PC-9 (cell line): ENCODE measurements at regions of chr2 and their contacts with region 1.

Region 1: DNA sequence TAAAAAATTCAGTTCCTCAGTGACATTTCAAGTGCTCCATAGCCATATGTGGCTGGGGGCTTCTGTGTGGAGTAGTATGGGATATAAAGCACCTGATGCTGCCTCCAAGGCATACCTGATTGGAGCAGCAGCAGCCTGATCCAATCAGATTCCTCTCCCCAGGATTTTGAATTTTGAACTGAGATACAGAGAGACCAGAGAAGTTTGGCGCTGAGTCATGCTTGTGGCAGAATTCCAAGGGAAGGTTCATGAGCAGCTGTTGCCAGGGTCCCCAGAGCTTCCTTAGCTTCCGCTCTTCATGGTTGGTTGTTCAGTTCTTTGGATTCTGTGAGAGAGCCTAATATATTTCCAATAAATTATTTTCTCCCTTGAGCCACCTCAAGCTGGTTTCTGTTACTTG is 29.0 kb upstream of the CFAP36 start:
- DNase-seq: no peak
- H3K4me3 ChIP-seq: no peak overlapping the region
- H3K27ac ChIP-seq: no peak overlapping the region
- H3K4me1 ChIP-seq: peaks cover 12% of the 10 kb centered on the region
- H3K27me3 ChIP-seq: no peaks in the 10 kb centered on the region
- CTCF ChIP-seq: no peak

Region 2: DNA sequence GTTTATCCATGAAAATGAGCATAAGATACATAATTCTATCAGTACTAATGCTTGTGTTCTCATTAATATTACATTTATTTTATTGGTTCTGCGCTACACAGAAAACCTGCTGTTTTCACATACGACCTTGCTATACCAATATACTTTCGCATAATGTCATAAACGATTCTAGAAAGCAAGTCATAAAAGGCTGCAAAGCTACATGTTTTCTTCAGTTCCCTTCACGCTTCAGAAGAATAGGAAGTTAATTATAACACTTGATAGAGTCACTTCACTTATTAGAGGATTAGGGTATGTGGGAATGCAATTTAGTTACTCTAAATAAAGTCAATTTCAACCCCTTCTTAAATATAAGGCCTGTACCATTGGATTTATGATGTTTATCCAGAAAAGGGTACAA is 1548.8 kb before region 1 on chr2:
- CTCF ChIA-PET with region 1: interaction called, 12 read pairs
- POLR2A ChIA-PET with region 1: no interaction called
- intact Hi-C with region 1: no loop called
- DNase-seq: no peak
- H3K4me3 ChIP-seq: no peak overlapping the region
- H3K27ac ChIP-seq: 0 out of 2 replicates have a peak overlapping the region, but pooled peaks have one; percentile 2
- H3K4me1 ChIP-seq: no peaks in the 10 kb centered on the region
- H3K27me3 ChIP-seq: no peaks in the 10 kb centered on the region
- CTCF ChIP-seq: no peak

Region 3: GRCh38 chr2:55511508-55512124 is 21.1 kb after region 1 on chr2:
- CTCF ChIA-PET with region 1: no interaction called
- POLR2A ChIA-PET with region 1: interaction called, 11 read pairs
- intact Hi-C with region 1: no loop called
- DNase-seq: peak in 1 of 2 experiments; percentile 10
- H3K4me3 ChIP-seq: no peak overlapping the region
- H3K27ac ChIP-seq: no peak overlapping the region
- H3K4me1 ChIP-seq: no peaks in the 10 kb centered on the region
- H3K27me3 ChIP-seq: no peaks in the 10 kb centered on the region
- CTCF ChIP-seq: peak; percentile 72